Heart right ventricle (tissue), 16 donors: ENCODE measurements at regions of chr1 and their contacts with region 1.

Region 1: GRCh38 chr1:100866041-100866900 is 28.4 kb downstream of the EXTL2 start:
- DNase-seq: no peak
- ATAC-seq: peak in 7 of 8 donors; percentile 57 to 75 (median 69)
- H3K4me3 ChIP-seq: peak overlapping the region in 1 of 10 donors; percentile 10
- H3K27ac ChIP-seq: no peak overlapping the region
- H3K4me1 ChIP-seq: peaks cover 0 to 11% (median 0%) of the 10 kb centered on the region in 9 donors
- H3K27me3 ChIP-seq: no peaks in the 10 kb centered on the region
- CTCF ChIP-seq: peak; percentile 45 to 78 (median 71)

Region 2: GRCh38 chr1:99818063-99818699 is 1048.1 kb before region 1 on chr1:
- intact Hi-C with region 1: loop called in 3 of 10 experiments (anchors 5 to 10 kb)
- DNase-seq: peak in 1 of 2 donors; percentile 9
- ATAC-seq: peak; percentile 34 to 94 (median 84)
- H3K4me3 ChIP-seq: no peak overlapping the region
- H3K27ac ChIP-seq: peak overlapping the region in 4 of 10 donors; percentile 45 to 63 (median 56)
- H3K4me1 ChIP-seq: peaks cover 0 to 8% (median 0%) of the 10 kb centered on the region in 9 donors
- H3K27me3 ChIP-seq: peaks cover 0 to 5% (median 0%) of the 10 kb centered on the region in 7 donors
- CTCF ChIP-seq: no peak

Region 3: GRCh38 chr1:100606438-100606837 is 259.8 kb before region 1 on chr1:
- intact Hi-C with region 1: loop called (anchors 1 to 10 kb)
- DNase-seq: peak; percentile 18 to 47
- ATAC-seq: peak in 7 of 8 donors; percentile 67 to 85 (median 77)
- H3K4me3 ChIP-seq: no peak overlapping the region
- H3K27ac ChIP-seq: no peak overlapping the region
- H3K4me1 ChIP-seq: peaks cover 0 to 3% (median 0%) of the 10 kb centered on the region in 9 donors
- H3K27me3 ChIP-seq: no peaks in the 10 kb centered on the region
- CTCF ChIP-seq: peak in 8 of 9 donors; percentile 45 to 80 (median 76)

Region 4: DNA sequence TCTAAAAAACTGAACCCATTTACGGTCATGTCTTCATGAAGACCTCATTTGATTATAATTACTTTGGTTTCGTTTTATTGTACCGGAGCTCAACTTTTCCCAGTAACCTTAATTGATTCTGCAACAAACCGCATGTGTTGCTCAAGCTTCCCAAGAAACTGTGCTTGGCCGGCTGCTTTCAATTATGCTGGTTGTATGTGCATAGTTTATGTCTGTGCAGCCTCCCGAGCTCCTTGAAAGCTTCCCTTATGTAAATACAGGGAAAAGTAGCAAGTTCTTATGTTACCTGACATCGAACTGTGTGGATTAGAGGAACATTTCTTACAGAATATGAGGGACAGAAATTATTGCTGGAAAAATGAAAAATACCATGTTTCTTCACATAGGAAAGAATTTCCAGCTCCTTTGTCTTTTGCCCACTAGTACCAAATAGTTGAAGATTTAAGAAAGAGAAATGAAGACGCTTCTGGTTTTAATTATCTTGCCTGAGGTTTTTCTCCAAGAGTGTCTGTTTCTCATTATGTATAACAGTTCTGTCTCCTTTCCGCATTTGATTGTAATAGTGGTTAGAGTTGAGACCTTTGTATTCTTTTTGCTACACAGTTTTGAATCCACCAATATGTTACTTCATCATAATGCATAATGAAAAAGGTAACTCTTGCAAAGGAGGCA is 144.6 kb before region 1 on chr1:
- intact Hi-C with region 1: loop called in 2 of 10 experiments (anchors 10 kb)
- DNase-seq: peak in 1 of 2 donors; percentile 17
- ATAC-seq: peak in 4 of 8 donors; percentile 46 to 57 (median 55)
- H3K4me3 ChIP-seq: peak overlapping the region in 9 of 10 donors; percentile 17 to 52 (median 46)
- H3K27ac ChIP-seq: peak overlapping the region in 6 of 10 donors; percentile 6 to 66 (median 55)
- H3K4me1 ChIP-seq: peaks cover 0 to 22% (median 3%) of the 10 kb centered on the region in 9 donors
- H3K27me3 ChIP-seq: no peaks in the 10 kb centered on the region
- CTCF ChIP-seq: no peak